ENCODE measurements at regions of chr1 and their contacts with region 1.

Region 1: GRCh38 chr1:31335007-31335406 is 37.9 kb downstream of the FABP3 start:
- DNase-seq: no peak
- ATAC-seq: peak; percentile 59 to 82 (median 78)
- H3K4me3 ChIP-seq: no peak overlapping the region
- H3K27ac ChIP-seq: no peak overlapping the region
- H3K4me1 ChIP-seq: no peaks in the 10 kb centered on the region
- H3K27me3 ChIP-seq: no peaks in the 10 kb centered on the region
- CTCF ChIP-seq: peak; percentile 45 to 57 (median 52)
- POLR2A ChIP-seq: no peak

Region 2: GRCh38 chr1:31182352-31182751 is 152.7 kb before region 1 on chr1:
- intact Hi-C with region 1: loop called (anchors 10 kb)
- DNase-seq: peak; percentile 49 to 71 (median 58)
- ATAC-seq: peak; percentile 64 to 78 (median 70)
- H3K4me3 ChIP-seq: no peak overlapping the region
- H3K27ac ChIP-seq: no peak overlapping the region
- H3K4me1 ChIP-seq: peaks cover 0 to 5% (median 0%) of the 10 kb centered on the region in 4 donors
- H3K27me3 ChIP-seq: no peaks in the 10 kb centered on the region
- CTCF ChIP-seq: peak in 1 of 4 donors; percentile 7
- POLR2A ChIP-seq: no peak

Measured in right lobe of liver (tissue), 6 donors.